ENCODE measurements at regions of chr5 and their contacts with region 1.

Region 1: GRCh38 chr5:52424401-52424800 is 363.3 kb upstream of the ITGA1 start:
- DNase-seq: no peak

Region 2: GRCh38 chr5:50814556-50814955 is 1609.8 kb before region 1 on chr5:
- intact Hi-C with region 1: no loop called
- DNase-seq: no peak

Region 3: DNA sequence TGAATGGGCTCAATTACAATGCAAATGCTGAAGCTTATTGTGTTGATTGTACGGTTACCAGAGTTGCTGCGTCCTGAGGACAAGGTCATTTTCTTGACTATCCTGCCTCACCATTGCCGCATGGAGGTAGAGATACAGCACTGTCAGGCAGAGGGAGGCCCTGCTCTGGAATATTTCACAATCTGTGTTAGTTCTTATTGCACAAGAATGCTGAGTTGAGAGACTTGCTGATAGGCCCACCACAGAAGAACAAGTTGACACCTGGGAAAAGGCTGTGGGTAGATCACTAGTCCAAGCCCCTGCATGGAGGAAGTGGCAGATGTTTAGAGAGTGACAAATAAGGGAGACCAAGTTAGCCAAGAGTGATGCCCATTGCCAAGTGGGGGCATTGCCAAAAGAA is 18.8 kb after region 1 on chr5:
- intact Hi-C with region 1: loop called in 1 of 2 experiments (anchors 1 kb)
- DNase-seq: no peak